ENCODE measurements at regions of chr15 and their contacts with region 1.

Region 1: GRCh38 chr15:71800835-71801745 is 9.3 kb upstream of the NR2E3 start:
- DNase-seq: peak; percentile 64
- ATAC-seq: peak; percentile 89
- H3K4me3 ChIP-seq: no peak overlapping the region
- H3K27ac ChIP-seq: no peak overlapping the region; the same call in 1 of the 2 replicates
- H3K4me1 ChIP-seq: peaks cover 16% of the 10 kb centered on the region
- H3K27me3 ChIP-seq: no peaks in the 10 kb centered on the region
- CTCF ChIP-seq: peak; percentile 87

Region 2: GRCh38 chr15:70763120-70763878 is 1037.8 kb before region 1 on chr15 and contains the start of gene UACA:
- CTCF ChIA-PET with region 1: interaction called, 13 read pairs
- POLR2A ChIA-PET with region 1: no interaction called
- in situ Hi-C with region 1: no loop called
- intact Hi-C with region 1: no loop called
- DNase-seq: peak; percentile 95
- ATAC-seq: peak; percentile 95
- H3K4me3 ChIP-seq: peak within 1 kb of the TSS; percentile 93
- H3K27ac ChIP-seq: peak within 1 kb of the TSS; percentile 100
- H3K4me1 ChIP-seq: peaks cover 42% of the 10 kb centered on the region
- H3K27me3 ChIP-seq: no peaks in the 10 kb centered on the region
- CTCF ChIP-seq: no peak
- total RNA-seq, gene UACA: 303 TPM

Region 3: GRCh38 chr15:71623111-71623510 is 178.0 kb before region 1 on chr15:
- CTCF ChIA-PET with region 1: no interaction called
- POLR2A ChIA-PET with region 1: no interaction called
- in situ Hi-C with region 1: no loop called
- intact Hi-C with region 1: no loop called
- DNase-seq: no peak
- ATAC-seq: no peak
- H3K4me3 ChIP-seq: no peak overlapping the region
- H3K27ac ChIP-seq: no peak overlapping the region
- H3K4me1 ChIP-seq: no peaks in the 10 kb centered on the region
- H3K27me3 ChIP-seq: no peaks in the 10 kb centered on the region
- CTCF ChIP-seq: no peak

Region 4: DNA sequence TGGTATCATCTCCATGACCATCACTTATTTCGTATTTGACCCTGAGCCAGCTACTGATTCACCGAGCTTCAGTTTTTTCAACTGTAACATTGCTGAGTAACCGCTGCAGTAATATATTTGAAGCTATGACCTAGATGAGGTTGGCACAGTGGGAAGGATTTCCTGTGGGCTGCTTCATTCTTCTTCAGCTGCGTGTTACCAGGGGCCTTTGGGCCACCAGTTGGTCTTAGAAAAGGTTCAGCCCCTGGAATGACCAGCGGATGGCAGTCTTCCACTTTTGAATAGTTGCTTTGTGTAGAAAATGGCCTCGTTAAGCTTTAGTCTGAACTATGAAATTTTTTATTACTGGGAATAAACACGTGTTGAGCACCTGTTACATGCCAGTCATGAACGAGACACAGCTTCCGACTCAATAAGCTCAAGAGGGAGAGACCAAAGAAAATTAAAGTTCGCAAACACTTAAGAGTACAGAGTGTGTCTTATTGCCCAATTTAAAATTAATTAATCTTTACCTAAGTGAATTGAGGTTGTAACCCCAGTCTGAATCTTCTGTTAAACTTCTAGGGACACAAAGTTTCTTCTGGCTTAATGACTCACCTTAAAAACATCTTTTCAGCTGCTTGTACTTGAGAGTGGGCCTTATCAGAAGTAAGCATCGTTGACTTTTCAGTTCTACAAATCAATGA is 48.3 kb before region 1 on chr15:
- CTCF ChIA-PET with region 1: interaction called, 12 read pairs
- POLR2A ChIA-PET with region 1: interaction called, 6 read pairs
- in situ Hi-C with region 1: no loop called
- intact Hi-C with region 1: loop called (anchors 5 kb)
- DNase-seq: peak; percentile 76
- ATAC-seq: peak; percentile 84
- H3K4me3 ChIP-seq: no peak overlapping the region
- H3K27ac ChIP-seq: peak overlapping the region; percentile 45
- H3K4me1 ChIP-seq: peaks cover 18% of the 10 kb centered on the region
- H3K27me3 ChIP-seq: no peaks in the 10 kb centered on the region
- CTCF ChIP-seq: peak; percentile 64

Region 5: GRCh38 chr15:72155635-72156616 is 354.8 kb after region 1 on chr15:
- CTCF ChIA-PET with region 1: no interaction called
- POLR2A ChIA-PET with region 1: no interaction called
- in situ Hi-C with region 1: no loop called
- intact Hi-C with region 1: loop called (anchors 5 kb)
- DNase-seq: peak; percentile 81
- ATAC-seq: peak; percentile 98
- H3K4me3 ChIP-seq: peak overlapping the region; percentile 45 to 72
- H3K27ac ChIP-seq: peak overlapping the region; percentile 32; the same call in 1 of the 2 replicates
- H3K4me1 ChIP-seq: peaks cover 8% of the 10 kb centered on the region
- H3K27me3 ChIP-seq: no peaks in the 10 kb centered on the region
- CTCF ChIP-seq: peak; percentile 90